ENCODE measurements at regions of chr14 and their contacts with region 1.

Region 1: DNA sequence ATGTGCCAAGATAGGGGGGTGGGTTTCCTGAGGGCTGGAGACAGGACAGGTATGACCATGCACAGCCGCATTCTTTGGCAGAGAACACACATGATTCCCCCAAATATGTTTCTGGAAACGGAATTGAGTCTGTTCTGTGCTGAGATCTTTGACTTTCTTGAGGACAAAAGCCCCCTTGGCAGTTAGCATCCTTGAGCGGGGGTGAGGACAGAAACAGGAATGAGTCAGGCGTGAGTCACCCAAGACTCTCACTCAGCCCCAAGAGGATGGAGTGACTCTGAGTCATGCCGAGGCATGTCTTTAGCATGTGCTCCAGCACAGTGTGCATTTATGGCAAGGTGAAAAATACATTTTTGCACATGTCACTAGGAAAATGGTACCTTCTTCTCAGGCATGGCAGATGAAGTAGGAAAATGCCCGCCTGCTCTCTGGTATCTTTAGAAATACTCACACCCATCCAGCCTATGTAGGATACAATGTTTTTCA is 52.1 kb downstream of the DAD1 start:
- DNase-seq: peak; percentile 80
- H3K4me3 Mint-ChIP-seq: peak overlapping the region; percentile 88
- H3K27ac Mint-ChIP-seq: peak overlapping the region; percentile 94
- H3K4me1 Mint-ChIP-seq: peaks cover 95% of the 10 kb centered on the region
- H3K27me3 Mint-ChIP-seq: no peaks in the 10 kb centered on the region

Region 2: DNA sequence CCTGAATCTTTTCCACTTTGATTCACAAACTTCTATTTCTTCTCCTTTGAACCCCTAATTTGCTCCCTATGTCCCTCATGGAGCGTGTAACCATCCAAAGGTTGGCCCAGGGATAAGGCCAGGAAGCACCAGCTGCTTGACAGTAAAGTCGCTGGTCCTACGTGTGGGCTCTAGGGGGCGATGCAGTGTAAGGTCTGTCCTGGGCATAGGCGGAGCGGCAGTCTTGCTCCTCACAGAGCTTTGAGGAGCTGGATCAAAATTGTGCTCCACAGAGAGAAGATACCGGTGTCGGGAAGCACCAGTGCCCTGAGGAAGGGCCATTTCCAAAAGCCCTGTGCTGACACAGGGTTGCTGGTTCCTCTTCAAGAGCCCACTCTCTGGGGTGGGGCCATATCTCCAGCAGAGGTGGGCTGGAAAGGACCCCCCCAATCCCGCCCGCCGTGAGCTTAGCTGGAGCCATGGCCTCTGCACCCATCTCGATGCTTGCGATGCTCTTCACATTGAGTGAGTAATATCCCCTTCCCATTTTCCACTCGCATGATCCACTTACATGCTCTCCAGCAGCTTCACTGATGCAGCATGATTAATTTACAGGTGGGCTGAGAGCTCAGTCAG is 813.4 kb before region 1 on chr14:
- intact Hi-C with region 1: loop called (anchors 5 kb)
- DNase-seq: peak; percentile 12
- H3K4me3 Mint-ChIP-seq: peak overlapping the region; percentile 67
- H3K27ac Mint-ChIP-seq: peak overlapping the region; percentile 42
- H3K4me1 Mint-ChIP-seq: no peaks in the 10 kb centered on the region
- H3K27me3 Mint-ChIP-seq: peaks cover 25% of the 10 kb centered on the region

Region 3: GRCh38 chr14:22122227-22122818 is 414.6 kb before region 1 on chr14:
- intact Hi-C with region 1: loop called (anchors 5 kb)
- DNase-seq: no peak
- H3K4me3 Mint-ChIP-seq: peak overlapping the region; percentile 90
- H3K27ac Mint-ChIP-seq: peak overlapping the region; percentile 79
- H3K4me1 Mint-ChIP-seq: peaks cover 21% of the 10 kb centered on the region
- H3K27me3 Mint-ChIP-seq: no peaks in the 10 kb centered on the region

Region 4: GRCh38 chr14:22519877-22520685 is 16.8 kb before region 1 on chr14:
- intact Hi-C with region 1: loop called (anchors 2 kb)
- DNase-seq: no peak
- H3K4me3 Mint-ChIP-seq: peak overlapping the region; percentile 84
- H3K27ac Mint-ChIP-seq: peak overlapping the region; percentile 95
- H3K4me1 Mint-ChIP-seq: peaks cover 98% of the 10 kb centered on the region
- H3K27me3 Mint-ChIP-seq: no peaks in the 10 kb centered on the region

Region 5: DNA sequence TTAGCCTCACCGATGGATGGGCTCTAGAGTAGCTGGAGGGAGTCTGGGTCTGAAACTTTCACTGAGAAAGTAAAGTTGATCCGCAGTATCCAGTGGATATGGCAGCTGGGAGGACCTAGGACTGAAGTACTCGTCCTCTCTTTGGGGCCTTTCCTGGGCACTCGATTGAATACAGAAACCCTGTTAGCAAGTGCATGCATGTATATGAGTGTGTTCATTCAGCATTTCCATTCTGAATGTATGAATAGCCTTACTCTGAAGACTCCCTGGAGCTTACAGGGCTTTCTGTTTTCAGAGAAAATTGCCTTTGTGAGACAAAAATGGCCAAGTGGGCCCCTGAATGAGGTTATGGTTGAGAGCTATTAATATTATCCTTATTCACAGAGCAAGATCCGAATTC is 10.7 kb before region 1 on chr14:
- intact Hi-C with region 1: loop called (anchors 1 kb)
- DNase-seq: no peak
- H3K4me3 Mint-ChIP-seq: peak overlapping the region; percentile 84
- H3K27ac Mint-ChIP-seq: peak overlapping the region; percentile 95
- H3K4me1 Mint-ChIP-seq: peaks cover 95% of the 10 kb centered on the region
- H3K27me3 Mint-ChIP-seq: no peaks in the 10 kb centered on the region

Region 6: DNA sequence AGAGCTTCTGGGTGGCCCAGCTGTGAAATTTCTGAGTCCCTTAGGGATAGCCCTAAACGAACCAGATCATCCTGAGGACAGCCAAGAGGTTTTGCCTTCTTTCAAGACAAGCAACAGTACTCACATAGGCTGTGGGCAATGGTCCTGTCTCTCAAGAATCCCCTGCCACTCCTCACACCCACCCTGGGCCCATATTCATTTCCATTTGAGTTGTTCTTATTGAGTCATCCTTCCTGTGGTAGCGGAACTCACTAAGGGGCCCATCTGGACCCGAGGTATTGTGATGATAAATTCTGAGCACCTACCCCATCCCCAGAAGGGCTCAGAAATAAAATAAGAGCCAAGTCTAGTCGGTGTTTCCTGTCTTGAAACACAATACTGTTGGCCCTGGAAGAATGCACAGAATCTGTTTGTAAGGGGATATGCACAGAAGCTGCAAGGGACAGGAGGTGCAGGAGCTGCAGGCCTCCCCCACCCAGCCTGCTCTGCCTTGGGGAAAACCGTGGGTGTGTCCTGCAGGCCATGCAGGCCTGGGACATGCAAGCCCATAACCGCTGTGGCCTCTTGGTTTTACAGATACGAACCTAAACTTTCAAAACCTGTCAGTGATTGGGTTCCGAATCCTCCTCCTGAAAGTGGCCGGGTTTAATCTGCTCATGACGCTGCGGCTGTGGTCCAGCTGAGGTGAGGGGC is 13.2 kb after region 1 on chr14:
- intact Hi-C with region 1: loop called (anchors 1 kb)
- DNase-seq: peak; percentile 73
- H3K4me3 Mint-ChIP-seq: peak overlapping the region; percentile 79
- H3K27ac Mint-ChIP-seq: peak overlapping the region; percentile 99
- H3K4me1 Mint-ChIP-seq: peaks cover 96% of the 10 kb centered on the region
- H3K27me3 Mint-ChIP-seq: no peaks in the 10 kb centered on the region

Measured in activated T-helper 1 cell treated with anti-CD3 and anti-CD28 coated beads, Interleukin-12 subunit alpha, Interleukin-12 subunit beta, Interleukin-2, Interleukin-4 antibody, amounts not matched to agents 30 ng/mL and 10 ng/mL and 1 ng/mL, durations not matched to agents 14 hours and 24 hours and 36 hours (primary cell).